Activated CD4-positive, alpha-beta memory T cell treated with anti-CD3 and anti-CD28 coated beads for 36 hours (primary cell): ENCODE measurements at regions of chr22 and their contacts with region 1.

Region 1: DNA sequence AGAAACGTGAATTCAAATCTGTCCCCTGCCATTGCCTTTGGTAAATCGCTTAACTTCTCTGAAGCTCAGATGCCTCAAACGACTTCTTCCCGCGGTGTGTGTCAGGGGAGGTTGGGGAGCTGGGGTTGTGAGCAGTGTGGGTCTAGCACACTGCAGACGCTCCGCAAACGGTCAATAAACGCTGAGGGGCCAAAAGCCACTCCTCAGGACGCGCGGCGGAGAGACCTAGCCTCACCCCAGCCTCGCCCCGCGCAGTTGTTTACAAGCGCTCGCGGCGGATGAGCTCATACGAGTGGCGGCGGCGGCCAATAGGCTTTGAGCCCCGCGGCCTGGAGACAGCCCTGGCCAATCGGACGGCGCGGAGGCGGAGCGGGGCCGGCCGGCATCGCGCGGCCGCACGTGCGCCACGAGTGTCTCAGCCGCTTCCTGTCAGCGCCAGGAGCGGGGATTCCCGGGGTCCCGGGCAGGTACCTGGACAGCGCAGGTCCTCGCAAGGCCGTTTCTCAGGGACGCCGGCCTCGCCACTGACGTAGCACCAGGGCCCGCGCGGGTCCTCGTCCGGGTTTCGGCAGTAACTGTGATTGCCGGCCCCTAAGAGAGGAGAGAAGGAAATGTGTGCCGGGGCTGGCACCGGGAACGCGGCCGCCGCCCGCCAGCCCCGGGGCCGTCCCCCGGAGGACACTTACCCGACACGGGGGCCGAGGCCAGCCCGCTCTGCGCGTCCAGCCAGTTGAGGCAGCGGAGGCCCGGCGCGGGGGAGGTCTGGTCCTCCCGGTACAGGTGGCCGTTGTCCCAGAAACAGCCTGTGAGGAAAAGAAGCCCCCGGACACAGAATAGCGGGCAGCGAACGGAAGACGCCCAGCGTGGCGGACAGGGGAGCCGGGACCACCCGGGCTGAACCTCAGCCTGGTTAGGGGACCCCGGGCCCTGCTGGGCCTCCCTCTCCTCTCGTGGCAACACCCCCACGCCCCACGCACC is 1.5 kb downstream of the PIK3IP1 start:
- DNase-seq: peak; percentile 96
- H3K4me3 Mint-ChIP-seq: peak overlapping the region; percentile 98
- H3K27ac Mint-ChIP-seq: peak overlapping the region; percentile 100
- H3K4me1 Mint-ChIP-seq: peaks cover 63% of the 10 kb centered on the region
- H3K27me3 Mint-ChIP-seq: no peaks in the 10 kb centered on the region

Region 2: DNA sequence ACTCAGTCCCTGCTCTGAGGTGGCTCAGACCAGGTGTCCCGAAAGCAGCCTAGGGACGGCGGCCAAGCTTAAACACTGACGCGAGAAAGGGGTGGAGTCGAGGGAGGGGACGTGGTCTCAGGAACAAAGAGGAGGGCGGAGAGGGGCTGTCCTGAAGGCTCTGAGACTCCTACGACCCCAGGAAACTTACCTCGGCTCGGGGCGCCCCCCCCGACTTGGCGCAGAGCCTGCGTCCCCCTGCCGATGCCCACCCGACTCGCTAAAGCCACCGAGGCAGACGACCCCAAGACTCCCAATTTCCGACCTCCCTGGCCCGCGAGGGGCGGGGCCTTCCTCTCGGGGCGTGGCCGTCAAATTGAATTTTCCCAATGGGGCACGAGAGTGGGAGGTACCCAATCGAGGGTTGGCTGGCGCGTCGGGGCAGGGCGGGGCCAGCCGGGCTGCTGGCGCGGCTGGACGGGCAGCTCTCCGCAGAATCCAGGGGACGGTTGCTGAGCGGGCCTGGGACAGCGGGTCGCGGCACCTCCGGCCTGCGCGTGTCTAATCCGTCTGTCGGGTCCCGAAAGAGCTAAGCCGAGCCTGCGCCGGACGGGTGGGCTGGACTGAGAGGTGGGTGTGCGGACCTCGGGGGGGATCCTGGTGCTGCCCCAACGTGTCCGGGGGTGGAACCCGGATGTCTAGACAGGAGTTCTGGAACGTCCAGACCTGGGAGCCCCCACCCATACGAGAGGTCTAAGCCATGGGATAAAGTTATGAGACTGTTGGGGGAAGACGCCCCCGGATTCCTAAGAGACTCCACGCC is 209.7 kb before region 1 on chr22 and contains the start of gene SMTN:
- CTCF ChIA-PET with region 1: interaction called, 10 read pairs
- POLR2A ChIA-PET with region 1: interaction called, 6 read pairs
- intact Hi-C with region 1: no loop called
- DNase-seq: peak; percentile 92
- H3K4me3 Mint-ChIP-seq: peak within 1 kb of the TSS; percentile 85
- H3K27ac Mint-ChIP-seq: peak within 1 kb of the TSS; percentile 45
- H3K4me1 Mint-ChIP-seq: peaks cover 30% of the 10 kb centered on the region
- H3K27me3 Mint-ChIP-seq: no peaks in the 10 kb centered on the region
- total RNA-seq, gene SMTN: 55.1 to 57.4 TPM

Region 3: DNA sequence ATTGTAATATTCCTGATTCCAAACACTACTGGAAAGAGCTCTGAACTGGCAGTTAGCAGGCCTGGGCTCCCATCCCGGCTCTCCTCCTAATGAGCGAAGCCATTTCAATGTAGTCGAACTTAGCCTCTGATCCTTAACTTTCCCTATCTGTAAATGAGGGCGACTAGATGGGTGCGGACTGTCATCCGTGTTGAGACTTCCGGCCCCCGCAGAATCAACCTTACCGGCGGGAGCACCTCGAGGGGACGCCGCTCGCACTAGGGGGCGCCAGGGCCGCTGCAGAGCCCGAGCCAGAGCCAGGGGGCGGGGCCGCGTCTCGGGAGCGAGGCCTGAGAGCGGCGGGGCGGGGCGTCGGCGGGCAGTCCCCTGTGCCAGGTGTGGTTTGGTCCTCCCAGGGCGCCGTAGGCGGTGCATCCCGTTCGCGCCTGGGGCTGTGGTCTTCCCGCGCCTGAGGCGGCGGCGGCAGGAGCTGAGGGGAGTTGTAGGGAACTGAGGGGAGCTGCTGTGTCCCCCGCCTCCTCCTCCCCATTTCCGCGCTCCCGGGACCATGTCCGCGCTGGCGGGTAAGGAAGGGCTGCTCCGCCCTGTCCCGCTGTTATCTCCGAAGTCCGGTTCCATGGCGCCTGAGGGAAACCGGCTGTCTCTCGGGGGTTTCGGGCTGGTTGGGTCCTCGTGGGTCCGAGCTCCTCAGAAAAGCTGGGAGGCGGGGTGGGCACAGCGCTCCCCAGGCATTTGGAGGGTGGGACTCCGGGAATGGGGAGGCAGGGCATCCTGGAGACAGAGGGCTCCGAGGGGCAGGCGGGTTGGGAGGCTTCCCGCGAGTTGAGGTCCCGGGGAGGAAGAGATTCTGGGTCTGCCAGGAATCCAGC is 78.7 kb before region 1 on chr22 and contains the start of gene LIMK2:
- CTCF ChIA-PET with region 1: interaction called, 25 read pairs
- POLR2A ChIA-PET with region 1: interaction called, 15 read pairs
- intact Hi-C with region 1: loop called (anchors 1 kb)
- DNase-seq: peak; percentile 98
- H3K4me3 Mint-ChIP-seq: peak within 1 kb of the TSS; percentile 83
- H3K27ac Mint-ChIP-seq: peak within 1 kb of the TSS; percentile 87
- H3K4me1 Mint-ChIP-seq: peaks cover 53% of the 10 kb centered on the region
- H3K27me3 Mint-ChIP-seq: no peaks in the 10 kb centered on the region
- total RNA-seq, gene LIMK2: 42.0 to 44.7 TPM

Region 4: GRCh38 chr22:31302006-31302405 is 11.2 kb after region 1 on chr22:
- CTCF ChIA-PET with region 1: interaction called, 13 read pairs
- POLR2A ChIA-PET with region 1: interaction called, 9 read pairs
- intact Hi-C with region 1: loop called (anchors 1 kb)
- DNase-seq: no peak
- H3K4me3 Mint-ChIP-seq: no peak overlapping the region
- H3K27ac Mint-ChIP-seq: no peak overlapping the region
- H3K4me1 Mint-ChIP-seq: peaks cover 39% of the 10 kb centered on the region
- H3K27me3 Mint-ChIP-seq: no peaks in the 10 kb centered on the region

Region 5: GRCh38 chr22:31399211-31400028 is 108.6 kb after region 1 on chr22 and contains the start of gene DRG1:
- CTCF ChIA-PET with region 1: no interaction called
- POLR2A ChIA-PET with region 1: no interaction called
- intact Hi-C with region 1: loop called (anchors 1 kb)
- DNase-seq: peak; percentile 98
- H3K4me3 Mint-ChIP-seq: peak within 1 kb of the TSS; percentile 93
- H3K27ac Mint-ChIP-seq: peak within 1 kb of the TSS; percentile 84
- H3K4me1 Mint-ChIP-seq: peaks cover 23% of the 10 kb centered on the region
- H3K27me3 Mint-ChIP-seq: peaks cover 2% of the 10 kb centered on the region
- total RNA-seq, gene DRG1: 97.1 to 116 TPM

Region 6: DNA sequence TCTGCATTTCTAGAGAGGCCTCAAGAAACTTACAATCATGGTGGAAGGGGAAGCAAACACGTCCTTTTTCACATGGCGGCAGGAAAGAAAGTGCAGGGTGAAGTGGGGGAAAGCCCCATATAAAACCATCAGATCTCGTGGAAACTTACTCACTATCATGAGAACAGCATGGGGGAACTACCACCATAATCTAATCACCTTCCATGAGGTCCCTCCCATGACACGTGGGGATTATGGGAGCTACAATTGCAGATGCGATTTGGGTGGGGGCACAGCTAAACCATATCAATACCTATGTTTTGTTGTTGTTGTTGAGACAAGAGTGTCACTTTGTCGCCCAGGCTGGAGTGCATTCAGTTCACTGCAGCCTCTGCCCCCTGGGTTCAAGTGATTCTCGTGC is 235.5 kb after region 1 on chr22:
- CTCF ChIA-PET with region 1: no interaction called
- POLR2A ChIA-PET with region 1: no interaction called
- intact Hi-C with region 1: no loop called
- DNase-seq: peak; percentile 76
- H3K4me3 Mint-ChIP-seq: peak overlapping the region; percentile 45
- H3K27ac Mint-ChIP-seq: peak overlapping the region; percentile 96
- H3K4me1 Mint-ChIP-seq: peaks cover 64% of the 10 kb centered on the region
- H3K27me3 Mint-ChIP-seq: no peaks in the 10 kb centered on the region

Region 7: DNA sequence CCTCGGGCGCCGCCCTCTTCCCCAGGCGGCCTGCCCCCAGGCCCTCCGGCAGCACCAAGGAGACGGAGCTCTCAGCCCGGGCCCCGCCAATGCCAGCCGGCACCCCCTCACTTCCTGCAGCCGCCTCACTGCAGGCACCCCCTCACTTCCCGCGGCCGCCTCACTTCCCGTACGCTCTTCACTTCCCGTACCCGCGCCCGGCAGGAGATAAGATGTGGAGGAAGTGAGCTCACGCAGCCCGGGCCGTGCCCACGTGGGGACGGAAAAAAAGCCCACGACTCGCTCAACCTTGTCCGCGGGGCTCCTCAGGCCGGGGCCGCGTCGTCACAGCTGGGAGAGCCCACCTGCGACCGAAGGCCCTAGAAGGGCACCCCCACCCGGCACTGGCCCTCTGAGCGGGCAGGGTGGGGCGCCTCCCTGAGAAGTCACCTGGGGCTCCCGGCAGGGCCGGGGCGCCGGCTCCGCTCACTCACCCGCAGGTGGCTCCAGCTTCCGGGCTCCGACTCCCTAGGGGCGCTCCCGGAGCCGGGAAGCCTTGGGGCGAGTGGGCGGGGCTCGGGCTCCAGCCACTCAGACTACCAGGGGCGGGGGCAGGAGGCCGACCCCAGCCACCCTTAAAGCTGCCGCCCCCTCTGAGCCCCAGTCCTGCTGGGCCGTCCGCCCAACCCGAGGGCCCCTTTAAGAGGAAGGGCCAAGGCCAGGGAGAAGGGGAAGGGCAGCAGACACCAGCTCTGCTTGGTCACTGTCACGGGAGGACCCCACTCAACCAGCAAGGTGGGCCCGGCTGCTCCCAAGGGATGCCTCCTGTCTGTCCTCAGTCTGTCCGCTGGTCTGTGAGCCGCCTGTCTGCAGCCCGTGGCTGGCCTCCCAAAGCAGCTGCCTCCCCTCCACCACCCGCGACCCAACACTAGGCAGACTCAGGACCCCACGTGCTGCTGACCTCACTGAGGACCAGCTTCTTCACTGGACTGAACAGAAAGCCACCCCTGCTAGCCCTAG is 339.8 kb after region 1 on chr22:
- CTCF ChIA-PET with region 1: no interaction called
- POLR2A ChIA-PET with region 1: interaction called, 4 read pairs
- intact Hi-C with region 1: loop called (anchors 5 kb)
- DNase-seq: peak; percentile 93
- H3K4me3 Mint-ChIP-seq: peak overlapping the region; percentile 81
- H3K27ac Mint-ChIP-seq: peak overlapping the region; percentile 91
- H3K4me1 Mint-ChIP-seq: peaks cover 61% of the 10 kb centered on the region
- H3K27me3 Mint-ChIP-seq: no peaks in the 10 kb centered on the region